ENCODE measurements at regions of chr2 and their contacts with region 1.

Region 1: DNA sequence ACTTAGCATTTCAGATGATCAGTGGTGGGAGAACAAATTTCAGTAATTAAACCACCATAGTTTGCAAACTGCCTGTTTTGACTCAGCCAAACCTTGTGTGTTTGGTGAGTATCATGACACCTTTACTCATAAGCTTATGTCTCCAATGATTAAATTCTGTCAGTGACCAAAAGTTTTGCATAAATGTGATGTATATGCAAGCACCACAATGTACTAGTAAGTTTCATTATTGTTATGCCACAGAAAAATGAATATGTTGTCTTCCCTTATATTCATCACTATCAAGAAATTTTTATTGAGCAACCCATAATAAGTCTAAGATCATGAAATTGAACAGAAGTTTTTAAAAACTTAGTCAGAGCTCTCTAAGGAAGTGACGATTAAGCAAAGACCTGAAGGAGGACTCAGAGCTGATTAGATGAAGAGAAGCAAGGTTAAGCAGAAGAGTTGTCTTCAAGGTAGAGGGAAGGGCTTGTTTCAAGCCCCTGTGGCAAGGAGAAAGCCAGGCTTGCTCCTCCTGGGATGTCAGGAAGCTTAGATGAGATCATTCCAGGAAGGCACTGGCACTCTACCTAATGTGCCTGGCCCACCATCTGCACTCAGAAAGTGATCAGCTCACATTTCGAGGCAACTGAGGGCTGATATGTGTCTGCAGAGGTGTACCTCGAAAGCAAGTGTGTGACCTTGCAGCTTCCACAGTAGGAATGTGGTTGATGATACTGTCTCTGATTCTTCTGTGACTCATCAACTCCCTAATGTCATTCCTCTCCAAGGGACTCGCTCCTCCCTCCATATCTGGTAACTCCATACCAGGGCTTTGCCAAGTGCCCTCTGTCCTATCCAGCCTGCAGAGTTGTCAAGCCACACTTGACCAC is 54.7 kb downstream of the KCTD18 start:
- DNase-seq: peak; percentile 43
- H3K4me3 Mint-ChIP-seq: no peak overlapping the region
- H3K27ac Mint-ChIP-seq: peak overlapping the region; percentile 91
- H3K4me1 Mint-ChIP-seq: peaks cover 32% of the 10 kb centered on the region
- H3K27me3 Mint-ChIP-seq: no peaks in the 10 kb centered on the region

Region 2: GRCh38 chr2:200373973-200374416 is 81.2 kb before region 1 on chr2:
- CTCF ChIA-PET with region 1: interaction called, 3 read pairs
- POLR2A ChIA-PET with region 1: interaction called, 10 read pairs
- intact Hi-C with region 1: loop called (anchors 1 kb)
- DNase-seq: peak; percentile 57
- H3K4me3 Mint-ChIP-seq: peak overlapping the region; percentile 64
- H3K27ac Mint-ChIP-seq: peak overlapping the region; percentile 63
- H3K4me1 Mint-ChIP-seq: peaks cover 40% of the 10 kb centered on the region
- H3K27me3 Mint-ChIP-seq: no peaks in the 10 kb centered on the region

Region 3: DNA sequence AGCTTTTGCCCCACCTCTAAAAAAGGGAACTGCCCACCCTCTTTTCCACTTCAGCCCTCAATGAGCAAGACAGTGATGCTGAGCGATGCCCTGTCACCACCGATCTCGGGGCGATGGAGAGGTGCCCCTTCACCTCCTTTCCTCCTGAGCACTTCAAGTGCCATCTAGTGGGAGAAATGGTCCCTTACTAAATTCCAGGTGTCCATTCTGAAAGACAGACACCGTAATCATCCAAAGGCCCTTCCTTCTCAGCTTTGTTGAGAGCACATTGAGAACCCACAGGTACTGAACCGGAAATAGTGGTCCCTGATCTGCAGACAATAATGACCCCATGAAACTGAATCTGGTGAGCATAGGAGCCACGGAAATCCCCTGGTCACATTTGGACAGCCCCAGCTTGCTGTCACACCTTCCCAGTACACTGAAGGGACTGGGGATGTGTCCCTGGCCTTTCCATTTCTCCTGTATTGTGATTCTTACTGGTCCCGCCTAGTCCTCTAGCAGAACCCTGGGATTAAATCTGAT is 16.2 kb after region 1 on chr2:
- CTCF ChIA-PET with region 1: interaction called, 18 read pairs
- POLR2A ChIA-PET with region 1: interaction called, 44 read pairs
- intact Hi-C with region 1: loop called (anchors 1 kb)
- DNase-seq: peak; percentile 63
- H3K4me3 Mint-ChIP-seq: no peak overlapping the region
- H3K27ac Mint-ChIP-seq: no peak overlapping the region
- H3K4me1 Mint-ChIP-seq: peaks cover 35% of the 10 kb centered on the region
- H3K27me3 Mint-ChIP-seq: no peaks in the 10 kb centered on the region

Region 4: GRCh38 chr2:200509612-200510433 is 54.7 kb after region 1 on chr2 and contains the start of gene KCTD18:
- CTCF ChIA-PET with region 1: no interaction called
- POLR2A ChIA-PET with region 1: no interaction called
- intact Hi-C with region 1: no loop called
- DNase-seq: peak; percentile 93
- H3K4me3 Mint-ChIP-seq: peak within 1 kb of the TSS; percentile 97
- H3K27ac Mint-ChIP-seq: peak within 1 kb of the TSS; percentile 86
- H3K4me1 Mint-ChIP-seq: peaks cover 30% of the 10 kb centered on the region
- H3K27me3 Mint-ChIP-seq: no peaks in the 10 kb centered on the region
- total RNA-seq, gene KCTD18: 13.8 to 14.9 TPM

Region 5: DNA sequence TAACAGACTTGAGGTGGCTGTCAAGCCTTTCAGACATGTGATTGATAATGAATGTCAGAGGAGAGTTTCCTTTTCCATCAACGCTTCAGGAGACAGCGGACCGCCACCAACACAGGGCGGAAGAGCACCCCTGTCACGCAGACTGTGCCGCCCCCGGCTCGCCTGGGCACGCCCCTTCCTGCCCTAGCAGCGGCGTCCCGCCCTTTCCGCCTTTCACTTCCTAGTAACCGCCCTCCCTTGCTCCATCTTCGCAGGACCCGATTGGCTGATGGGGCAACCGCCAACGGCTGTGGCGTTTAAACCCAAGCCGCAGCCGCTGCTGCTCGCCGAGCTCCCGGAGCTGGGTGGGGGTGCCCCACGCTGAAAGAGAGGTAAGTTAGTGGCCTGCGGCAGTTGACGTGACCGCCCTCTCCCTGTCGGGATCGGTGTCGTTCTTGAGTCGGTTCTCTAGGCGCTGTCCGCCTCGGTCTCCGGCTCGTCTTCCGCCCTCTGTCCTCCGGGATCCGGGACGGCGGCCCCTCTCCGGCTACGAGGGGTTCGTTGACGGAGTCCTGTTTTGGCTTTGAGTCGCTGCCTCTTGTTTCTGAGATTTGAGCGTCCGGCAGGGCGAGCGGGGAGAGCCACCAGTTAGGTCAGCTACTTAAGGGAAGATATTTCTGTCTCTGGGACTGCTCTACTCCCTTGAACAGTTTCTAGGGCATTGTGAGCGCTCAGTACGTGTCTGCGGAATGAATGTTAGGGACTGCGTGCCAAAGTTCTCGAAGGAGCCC is 70.9 kb after region 1 on chr2 and contains the start of gene SGO2:
- CTCF ChIA-PET with region 1: no interaction called
- POLR2A ChIA-PET with region 1: no interaction called
- intact Hi-C with region 1: loop called (anchors 2 kb)
- DNase-seq: peak; percentile 98
- H3K4me3 Mint-ChIP-seq: peak within 1 kb of the TSS; percentile 88
- H3K27ac Mint-ChIP-seq: peak within 1 kb of the TSS; percentile 73
- H3K4me1 Mint-ChIP-seq: peaks cover 20% of the 10 kb centered on the region
- H3K27me3 Mint-ChIP-seq: no peaks in the 10 kb centered on the region
- total RNA-seq, gene SGO2: 40.5 to 40.7 TPM

Region 6: DNA sequence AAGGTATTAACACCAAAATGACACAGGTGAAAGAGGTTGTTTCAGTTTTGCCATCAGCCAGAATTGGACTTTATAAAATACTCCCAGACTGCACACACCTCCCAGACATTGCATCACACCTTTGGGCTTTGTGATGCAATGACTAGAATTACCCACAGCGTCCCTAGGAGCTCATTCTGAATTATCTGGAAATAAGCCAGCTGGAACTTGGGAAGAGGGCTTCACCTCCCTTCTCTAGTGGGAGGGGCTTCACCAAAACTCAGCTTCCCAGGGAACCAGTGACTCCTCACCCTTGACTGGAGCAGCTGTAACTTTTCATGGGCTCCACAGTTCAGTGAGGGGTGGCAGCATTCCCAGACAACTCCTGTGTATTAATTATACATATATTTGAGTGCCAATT is 273.5 kb after region 1 on chr2:
- CTCF ChIA-PET with region 1: no interaction called
- POLR2A ChIA-PET with region 1: no interaction called
- intact Hi-C with region 1: no loop called
- DNase-seq: no peak
- H3K4me3 Mint-ChIP-seq: no peak overlapping the region
- H3K27ac Mint-ChIP-seq: no peak overlapping the region
- H3K4me1 Mint-ChIP-seq: peaks cover 3% of the 10 kb centered on the region
- H3K27me3 Mint-ChIP-seq: peaks cover 3% of the 10 kb centered on the region

Measured in activated CD4-positive, alpha-beta memory T cell treated with anti-CD3 and anti-CD28 coated beads for 36 hours (primary cell).